Activated naive CD4-positive, alpha-beta T cell treated with anti-CD3 and anti-CD28 coated beads for 36 hours (primary cell): ENCODE measurements at regions of chr12 and their contacts with region 1.

Region 1: GRCh38 chr12:123075646-123076171 is 75.2 kb downstream of the PITPNM2 start:
- DNase-seq: peak; percentile 90
- H3K4me3 Mint-ChIP-seq: peak overlapping the region; percentile 67
- H3K27ac Mint-ChIP-seq: peak overlapping the region; percentile 93
- H3K4me1 Mint-ChIP-seq: peaks cover 44% of the 10 kb centered on the region
- H3K27me3 Mint-ChIP-seq: no peaks in the 10 kb centered on the region

Region 2: GRCh38 chr12:122888232-122888867 is 187.4 kb before region 1 on chr12:
- CTCF ChIA-PET with region 1: no interaction called
- intact Hi-C with region 1: loop called (anchors 2 kb)
- DNase-seq: peak; percentile 72
- H3K4me3 Mint-ChIP-seq: peak overlapping the region; percentile 77
- H3K27ac Mint-ChIP-seq: peak overlapping the region; percentile 91
- H3K4me1 Mint-ChIP-seq: peaks cover 79% of the 10 kb centered on the region
- H3K27me3 Mint-ChIP-seq: peaks cover 3% of the 10 kb centered on the region

Region 3: GRCh38 chr12:122980183-122981046 is 95.3 kb before region 1 on chr12 and contains the start of gene ARL6IP4:
- CTCF ChIA-PET with region 1: no interaction called
- intact Hi-C with region 1: loop called (anchors 1 kb)
- DNase-seq: peak; percentile 65
- H3K4me3 Mint-ChIP-seq: peak within 1 kb of the TSS; percentile 81
- H3K27ac Mint-ChIP-seq: peak within 1 kb of the TSS; percentile 84
- H3K4me1 Mint-ChIP-seq: peaks cover 62% of the 10 kb centered on the region
- H3K27me3 Mint-ChIP-seq: no peaks in the 10 kb centered on the region
- total RNA-seq, gene ARL6IP4: 159 to 177 TPM

Region 4: GRCh38 chr12:123031171-123031845 is 44.4 kb before region 1 on chr12:
- CTCF ChIA-PET with region 1: no interaction called
- intact Hi-C with region 1: no loop called
- DNase-seq: no peak
- H3K4me3 Mint-ChIP-seq: no peak overlapping the region
- H3K27ac Mint-ChIP-seq: no peak overlapping the region
- H3K4me1 Mint-ChIP-seq: peaks cover 36% of the 10 kb centered on the region
- H3K27me3 Mint-ChIP-seq: no peaks in the 10 kb centered on the region

Region 5: DNA sequence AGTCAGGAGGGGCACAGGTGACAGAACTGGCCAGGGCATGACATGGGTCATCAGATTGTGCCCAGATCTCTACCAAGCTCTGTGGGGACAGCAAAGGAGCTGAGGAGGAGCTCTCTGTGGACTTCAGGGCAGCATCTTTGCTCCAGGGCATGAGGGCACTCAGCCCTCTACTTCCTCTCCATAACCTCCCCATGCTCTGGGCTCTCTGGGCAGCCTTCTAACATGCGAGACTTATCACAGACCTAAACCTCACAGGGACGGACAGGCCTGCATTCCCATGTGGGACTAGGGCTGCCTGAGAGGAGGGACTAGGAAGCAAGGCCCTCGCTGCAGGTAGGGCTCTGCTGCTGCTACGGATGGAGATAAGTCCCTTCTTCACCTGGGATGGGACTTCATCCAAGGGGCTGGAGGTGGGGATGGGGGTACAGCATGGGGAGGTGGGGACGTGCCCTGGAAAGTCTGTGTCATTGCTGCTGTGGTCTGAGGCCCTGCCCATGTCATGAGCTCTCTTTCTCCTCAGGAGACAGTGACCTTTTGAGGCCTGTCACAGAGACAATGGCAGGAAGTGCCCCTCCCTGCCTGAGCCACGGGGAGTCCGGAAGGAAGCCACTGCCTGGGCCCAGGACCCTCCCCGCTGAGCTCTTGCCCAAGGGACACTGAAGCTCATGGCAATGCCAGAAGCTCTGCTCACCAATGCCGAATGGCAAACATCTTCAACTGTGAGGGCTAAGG is 31.1 kb after region 1 on chr12:
- CTCF ChIA-PET with region 1: interaction called, 4 read pairs
- intact Hi-C with region 1: loop called (anchors 1 kb)
- DNase-seq: peak; percentile 86
- H3K4me3 Mint-ChIP-seq: peak overlapping the region; percentile 55
- H3K27ac Mint-ChIP-seq: peak overlapping the region; percentile 90
- H3K4me1 Mint-ChIP-seq: peaks cover 57% of the 10 kb centered on the region
- H3K27me3 Mint-ChIP-seq: no peaks in the 10 kb centered on the region

Region 6: GRCh38 chr12:123131879-123132452 is 56.3 kb after region 1 on chr12:
- CTCF ChIA-PET with region 1: no interaction called
- intact Hi-C with region 1: loop called (anchors 1 kb)
- DNase-seq: peak; percentile 74
- H3K4me3 Mint-ChIP-seq: peak overlapping the region; percentile 77
- H3K27ac Mint-ChIP-seq: peak overlapping the region; percentile 85
- H3K4me1 Mint-ChIP-seq: peaks cover 41% of the 10 kb centered on the region
- H3K27me3 Mint-ChIP-seq: no peaks in the 10 kb centered on the region

Region 7: DNA sequence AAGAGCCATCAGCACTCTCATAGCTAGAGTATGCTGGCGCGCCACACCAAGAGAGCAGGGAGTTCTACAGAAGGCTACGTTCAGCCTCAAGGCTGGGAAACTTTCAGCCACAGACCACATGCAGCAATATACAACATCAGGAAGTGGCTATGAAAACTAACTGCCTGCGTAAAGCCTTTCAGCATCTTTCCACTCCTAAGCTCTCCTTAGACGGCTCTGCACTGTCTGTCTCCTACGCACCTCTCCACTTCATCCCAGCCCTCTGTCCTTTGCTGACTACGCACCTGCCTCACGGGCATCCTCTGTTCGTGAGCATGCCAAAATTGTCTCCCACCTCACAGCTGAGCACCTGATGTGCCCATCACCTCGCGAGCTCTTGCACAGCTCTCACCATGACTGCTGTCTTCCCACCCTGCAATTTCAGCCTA is 147.5 kb after region 1 on chr12:
- CTCF ChIA-PET with region 1: no interaction called
- intact Hi-C with region 1: no loop called
- DNase-seq: peak; percentile 73
- H3K4me3 Mint-ChIP-seq: peak overlapping the region; percentile 8
- H3K27ac Mint-ChIP-seq: peak overlapping the region; percentile 28
- H3K4me1 Mint-ChIP-seq: peaks cover 35% of the 10 kb centered on the region
- H3K27me3 Mint-ChIP-seq: no peaks in the 10 kb centered on the region

Region 8: DNA sequence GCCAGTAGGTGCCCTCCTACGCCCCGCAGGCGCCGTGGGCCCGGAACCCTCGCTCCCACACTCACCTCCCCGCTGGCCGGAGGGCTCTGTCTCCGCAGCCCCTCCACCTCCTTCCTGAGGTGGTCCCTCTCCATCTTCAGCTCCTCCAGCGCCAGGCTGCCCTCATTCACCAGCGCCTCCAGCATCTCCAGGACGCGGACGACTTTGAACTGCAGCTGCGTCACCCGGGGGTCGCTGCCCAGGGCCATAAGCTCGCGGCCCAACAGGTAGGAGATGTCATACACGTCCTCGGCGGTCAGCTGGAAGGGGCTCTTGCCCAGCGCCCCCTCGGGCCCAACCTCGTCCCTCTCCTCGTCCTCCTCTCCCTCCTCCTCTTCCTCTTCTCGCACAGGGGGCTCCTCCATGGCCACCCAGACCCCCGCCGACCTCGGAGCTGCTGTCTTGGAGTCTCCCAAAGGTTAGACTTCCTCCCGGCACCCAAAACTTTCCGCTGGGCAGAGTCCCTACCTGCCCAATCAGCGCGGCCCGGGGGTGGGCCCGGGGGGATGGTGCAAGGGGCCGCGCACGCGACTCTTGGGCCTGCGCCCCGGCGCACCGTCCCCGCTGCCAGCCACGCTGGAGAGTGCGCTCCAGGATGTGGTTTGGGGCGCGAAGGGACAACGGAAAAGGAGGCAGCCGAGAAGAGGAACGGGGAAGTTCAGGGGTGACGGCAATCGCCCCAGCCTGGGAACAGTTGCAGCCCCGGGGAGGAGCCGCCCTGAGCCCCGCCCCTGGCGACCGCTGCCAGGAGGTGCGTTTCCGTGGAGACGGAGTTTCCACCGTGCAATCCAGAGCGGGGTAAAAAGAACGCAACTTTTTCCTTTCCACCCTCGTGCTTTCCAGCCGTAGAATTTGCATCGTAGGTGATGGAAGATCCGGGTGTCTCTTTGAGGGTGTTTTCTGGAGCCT is 360.6 kb after region 1 on chr12 and contains the start of gene RILPL2:
- CTCF ChIA-PET with region 1: no interaction called
- intact Hi-C with region 1: loop called (anchors 1 kb)
- DNase-seq: peak; percentile 97
- H3K4me3 Mint-ChIP-seq: peak within 1 kb of the TSS; percentile 92
- H3K27ac Mint-ChIP-seq: peak within 1 kb of the TSS; percentile 93
- H3K4me1 Mint-ChIP-seq: peaks cover 43% of the 10 kb centered on the region
- H3K27me3 Mint-ChIP-seq: no peaks in the 10 kb centered on the region
- total RNA-seq, gene RILPL2: 8.1 to 9.1 TPM